Sigmoid colon (tissue), 7 donors: ENCODE measurements at regions of chr3 and their contacts with region 1.

Region 1: GRCh38 chr3:32420126-32421038 is 28.7 kb downstream of the CMTM7 start:
- DNase-seq: no peak
- H3K4me3 ChIP-seq: no peak overlapping the region
- H3K27ac ChIP-seq: peak overlapping the region; percentile 49 to 72 (median 63)
- H3K4me1 ChIP-seq: peaks cover 0 to 25% (median 23%) of the 10 kb centered on the region in 4 donors
- H3K27me3 ChIP-seq: no peaks in the 10 kb centered on the region
- CTCF ChIP-seq: no peak
- EP300 ChIP-seq: no peak
- POLR2A ChIP-seq: no peak

Region 2: GRCh38 chr3:32374788-32375595 is 45.4 kb before region 1 on chr3:
- intact Hi-C with region 1: loop called (anchors 10 kb)
- DNase-seq: peak; percentile 72
- H3K4me3 ChIP-seq: no peak overlapping the region
- H3K27ac ChIP-seq: no peak overlapping the region
- H3K4me1 ChIP-seq: no peaks in the 10 kb centered on the region
- H3K27me3 ChIP-seq: no peaks in the 10 kb centered on the region
- CTCF ChIP-seq: peak; percentile 22 to 66 (median 60)
- EP300 ChIP-seq: no peak
- POLR2A ChIP-seq: no peak